GM12878 (cell line): ENCODE measurements at regions of chr21 and their contacts with region 1.

Region 1: DNA sequence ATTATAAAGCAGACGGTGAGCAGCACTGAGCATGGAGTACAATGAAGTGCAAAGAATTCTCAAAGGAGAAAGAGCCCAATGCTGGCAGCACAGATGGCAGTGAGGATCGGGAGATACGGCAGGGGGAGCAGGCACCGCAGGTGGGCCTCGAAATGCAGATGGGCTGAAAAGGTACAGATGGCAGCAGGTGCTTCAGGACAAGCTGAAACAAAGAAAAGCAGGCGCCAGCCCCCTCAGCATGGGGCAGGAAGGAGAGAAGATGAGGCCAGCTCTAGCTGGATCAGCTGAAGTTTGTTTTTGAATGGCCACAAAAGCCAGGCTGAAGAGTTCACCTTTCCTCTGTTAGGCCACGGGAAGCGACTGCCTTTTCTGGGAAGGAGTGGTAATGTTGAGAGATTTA is 7.7 kb downstream of the CFAP298 start:
- DNase-seq: no peak
- ATAC-seq: no peak
- H3K4me3 ChIP-seq: no peak overlapping the region
- H3K27ac ChIP-seq: no peak overlapping the region
- H3K4me1 ChIP-seq: no peaks in the 10 kb centered on the region
- H3K27me3 ChIP-seq: no peaks in the 10 kb centered on the region
- CTCF ChIP-seq: no peak
- EP300 ChIP-seq: no peak
- POLR2A ChIP-seq: no peak
- RAD21 ChIP-seq: no peak

Region 2: GRCh38 chr21:31866077-31866511 is 738.4 kb before region 1 on chr21:
- CTCF ChIA-PET with region 1: no interaction called
- POLR2A ChIA-PET with region 1: no interaction called
- RAD21 ChIA-PET with region 1: no interaction called
- SMC1A ChIA-PET with region 1: no interaction called
- in situ Hi-C with region 1: no loop called
- intact Hi-C with region 1: loop called (anchors 10 kb)
- DNase-seq: no peak
- ATAC-seq: peak; percentile 95
- H3K4me3 ChIP-seq: no peak overlapping the region
- H3K27ac ChIP-seq: no peak overlapping the region
- H3K4me1 ChIP-seq: no peaks in the 10 kb centered on the region
- H3K27me3 ChIP-seq: 0 out of 4 replicates have a peak, but pooled peaks cover 0 to 7% of the 10 kb centered on the region in 2 experiments
- CTCF ChIP-seq: peak; percentile 66 to 79 (median 76)
- EP300 ChIP-seq: no peak
- POLR2A ChIP-seq: no peak
- RAD21 ChIP-seq: peak; percentile 72

Region 3: DNA sequence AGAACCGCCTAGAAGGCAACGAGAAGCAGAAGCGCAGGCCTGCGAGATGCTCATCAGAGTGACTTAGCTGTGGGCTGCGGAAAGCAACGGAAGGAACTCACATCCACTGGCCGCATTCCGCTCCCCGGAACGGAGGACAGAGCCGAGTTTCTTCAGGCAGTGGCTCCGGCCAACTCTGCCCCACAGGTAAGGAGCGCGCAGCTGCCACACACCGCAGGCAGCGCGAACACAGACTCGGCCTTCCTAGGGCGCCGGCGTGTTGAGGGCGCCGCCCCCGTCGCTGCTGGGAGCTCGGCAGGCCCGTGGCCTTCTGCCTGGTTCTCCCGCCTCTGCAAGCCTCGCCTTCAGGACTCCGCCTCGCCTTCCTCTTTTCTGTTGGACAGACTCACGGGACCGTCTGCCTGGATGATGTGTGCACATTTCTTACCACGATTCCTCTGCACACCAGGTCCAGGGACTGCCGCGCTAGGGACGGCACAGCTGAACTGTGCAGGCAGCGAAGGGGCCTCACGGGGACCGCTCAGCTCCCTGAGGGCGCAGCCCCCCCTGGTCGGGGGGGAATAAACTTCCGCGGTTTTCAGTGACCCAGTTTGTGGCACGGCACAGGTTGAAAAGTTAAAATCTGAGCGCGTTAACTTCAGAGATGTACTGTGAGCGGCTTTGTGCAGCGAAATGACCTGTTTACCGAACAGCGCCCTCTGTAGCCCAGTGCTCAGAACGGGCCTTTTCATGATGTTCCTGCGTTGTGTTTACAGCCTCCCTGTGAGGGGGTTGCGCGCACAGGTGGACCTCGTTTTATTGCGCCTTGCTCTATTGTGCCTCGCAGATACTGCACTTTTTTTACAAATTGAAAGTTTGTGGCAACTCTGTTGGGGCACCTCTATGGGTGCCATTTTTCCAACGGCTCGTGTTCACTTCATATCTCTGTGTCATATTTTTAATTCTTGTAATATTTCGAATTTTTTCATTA is 34.9 kb before region 1 on chr21:
- CTCF ChIA-PET with region 1: interaction called, 12 read pairs
- POLR2A ChIA-PET with region 1: no interaction called
- RAD21 ChIA-PET with region 1: interaction called, 4 read pairs
- SMC1A ChIA-PET with region 1: interaction called, 4 read pairs
- in situ Hi-C with region 1: no loop called
- intact Hi-C with region 1: no loop called
- DNase-seq: peak; percentile 13
- ATAC-seq: peak; percentile 99
- H3K4me3 ChIP-seq: peak overlapping the region; percentile 73
- H3K27ac ChIP-seq: no peak overlapping the region
- H3K4me1 ChIP-seq: no peaks in the 10 kb centered on the region; the same call in 1 of the 2 replicates
- H3K27me3 ChIP-seq: peaks cover 2 to 3% of the 10 kb centered on the region in 2 experiments; a peak in 1 of 4 replicates
- CTCF ChIP-seq: peak; percentile 81 to 91 (median 86)
- EP300 ChIP-seq: no peak
- POLR2A ChIP-seq: peak; percentile 36; the same call in 1 of the 2 replicates
- RAD21 ChIP-seq: peak; percentile 53